Activated CD4-positive, alpha-beta memory T cell treated with anti-CD3 and anti-CD28 coated beads for 36 hours (primary cell): ENCODE measurements at regions of chr14 and their contacts with region 1.

Region 1: GRCh38 chr14:76151398-76152339 is at the start of gene GPATCH2L:
- DNase-seq: peak; percentile 99
- H3K4me3 Mint-ChIP-seq: peak within 1 kb of the TSS; percentile 93
- H3K27ac Mint-ChIP-seq: peak within 1 kb of the TSS; percentile 96
- H3K4me1 Mint-ChIP-seq: peaks cover 49% of the 10 kb centered on the region
- H3K27me3 Mint-ChIP-seq: no peaks in the 10 kb centered on the region
- total RNA-seq, gene GPATCH2L: 50.1 to 52.1 TPM

Region 2: GRCh38 chr14:76761136-76761959 is 609.7 kb after region 1 on chr14 and contains the start of gene VASH1:
- CTCF ChIA-PET with region 1: no interaction called
- POLR2A ChIA-PET with region 1: no interaction called
- intact Hi-C with region 1: loop called (anchors 5 kb)
- DNase-seq: peak; percentile 73
- H3K4me3 Mint-ChIP-seq: peak within 1 kb of the TSS; percentile 75
- H3K27ac Mint-ChIP-seq: no peak within 1 kb of the TSS
- H3K4me1 Mint-ChIP-seq: peaks cover 12% of the 10 kb centered on the region
- H3K27me3 Mint-ChIP-seq: peaks cover 6% of the 10 kb centered on the region
- total RNA-seq, gene VASH1: 6.1 TPM